Caco-2 (cell line): ENCODE measurements at regions of chr11 and their contacts with region 1.

Region 1: DNA sequence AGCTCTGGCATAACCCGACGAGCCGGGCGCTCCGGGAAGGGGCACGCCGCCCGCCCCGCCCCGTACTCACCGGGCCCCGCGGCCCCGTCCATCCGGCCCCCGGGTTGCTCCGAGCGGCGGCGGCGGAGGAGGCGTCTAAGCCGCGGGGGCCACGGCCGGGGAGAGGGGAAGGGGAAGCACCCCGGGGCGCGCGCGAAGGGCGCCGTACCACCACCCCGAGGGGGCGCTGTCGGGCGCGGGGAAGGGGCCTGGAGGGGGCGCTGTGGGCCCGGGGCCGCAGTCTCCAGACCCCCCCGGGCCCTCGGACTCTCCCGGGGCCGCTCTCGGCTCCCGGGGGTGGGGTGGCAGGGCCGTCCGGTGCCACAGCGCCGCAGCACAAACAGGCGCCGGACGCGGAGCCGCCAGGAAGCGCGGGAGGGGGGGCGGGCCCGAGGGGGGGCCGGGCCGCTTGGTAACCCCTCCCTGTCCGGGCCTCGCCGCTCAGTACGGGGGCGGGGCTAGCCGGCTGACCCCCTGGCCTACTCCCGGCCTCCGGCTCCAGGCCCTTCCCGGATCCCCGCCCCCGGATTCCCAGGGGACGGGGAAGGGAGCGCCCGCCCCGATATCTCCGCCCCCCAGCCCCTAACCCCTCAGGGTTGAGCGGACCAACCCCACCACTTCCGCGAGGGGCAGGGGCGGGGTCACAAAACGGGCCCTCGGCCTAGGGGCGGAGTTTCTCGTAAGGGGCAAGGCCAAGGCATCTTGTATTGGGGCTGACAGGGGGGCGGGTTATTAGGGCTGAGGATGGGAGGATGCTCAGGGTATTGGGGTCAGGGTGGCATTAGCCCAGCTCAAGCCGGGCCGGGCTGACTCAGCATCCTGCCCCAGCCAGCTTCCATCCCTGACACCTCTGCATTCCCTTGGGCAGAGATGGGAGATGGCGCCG is at the starts of genes EML3 and ROM1:
- DNase-seq: peak; percentile 93
- H3K4me3 ChIP-seq: peak within 1 kb of the TSS; percentile 87
- H3K4me3 Mint-ChIP-seq: peak within 1 kb of the TSS; percentile 97
- H3K27ac Mint-ChIP-seq: peak within 1 kb of the TSS; percentile 93
- H3K4me1 ChIP-seq: peaks cover 30% of the 10 kb centered on the region
- H3K4me1 Mint-ChIP-seq: peaks cover 33% of the 10 kb centered on the region
- H3K27me3 ChIP-seq: no peaks in the 10 kb centered on the region
- H3K27me3 Mint-ChIP-seq: no peaks in the 10 kb centered on the region
- CTCF ChIP-seq: peak; percentile 99
- total RNA-seq, gene EML3: 61.2 and 68.7 TPM in 2 replicates
- total RNA-seq, gene ROM1: 1.1 and 1.3 TPM in 2 replicates

Region 2: DNA sequence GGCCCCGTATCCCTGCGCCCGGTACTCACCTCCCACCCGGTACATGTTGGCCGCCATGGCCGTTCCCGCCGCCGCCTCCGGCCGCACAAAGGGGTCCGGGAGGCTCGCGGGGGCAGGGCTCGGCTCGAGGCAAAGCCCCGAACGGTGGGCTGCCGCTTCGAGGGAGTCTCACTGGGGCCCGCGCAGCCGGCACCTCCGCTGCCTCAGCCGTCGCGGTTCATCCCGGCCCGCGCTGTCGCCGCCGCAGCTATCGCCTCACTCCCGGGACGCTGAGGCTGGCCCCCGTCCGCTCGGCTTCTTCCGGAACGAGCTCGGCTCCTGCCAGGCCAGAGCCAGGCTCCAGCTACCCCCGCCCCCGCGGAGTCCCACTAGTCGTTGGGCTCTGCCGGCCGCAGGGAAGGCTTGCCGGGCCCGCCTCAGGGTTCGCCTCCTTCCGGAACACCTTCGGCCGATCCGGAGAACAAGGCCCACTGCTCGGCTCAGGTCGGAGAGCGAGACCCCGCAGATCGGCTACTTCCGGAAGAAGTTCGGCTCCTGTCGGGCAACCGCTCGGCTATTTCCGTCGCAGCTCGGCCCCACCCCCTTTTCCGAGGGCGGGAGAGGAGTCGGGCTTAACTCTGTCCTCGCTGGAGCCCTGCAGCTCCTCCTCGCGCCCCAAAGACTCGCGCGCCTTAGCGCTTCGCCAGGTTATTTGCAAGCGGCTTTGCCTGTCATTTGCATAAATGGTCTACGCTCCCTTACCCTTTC is 11.1 kb before region 1 on chr11 and contains the start of gene MTA2:
- CTCF ChIA-PET with region 1: interaction called, 19 read pairs
- POLR2A ChIA-PET with region 1: interaction called, 6 read pairs
- intact Hi-C with region 1: no loop called
- DNase-seq: peak; percentile 99 to 100
- H3K4me3 ChIP-seq: peak within 1 kb of the TSS; percentile 97
- H3K4me3 Mint-ChIP-seq: peak within 1 kb of the TSS; percentile 88
- H3K27ac Mint-ChIP-seq: peak within 1 kb of the TSS; percentile 89
- H3K4me1 ChIP-seq: peaks cover 35% of the 10 kb centered on the region
- H3K4me1 Mint-ChIP-seq: peaks cover 36% of the 10 kb centered on the region
- H3K27me3 ChIP-seq: no peaks in the 10 kb centered on the region
- H3K27me3 Mint-ChIP-seq: no peaks in the 10 kb centered on the region
- CTCF ChIP-seq: no peak
- total RNA-seq, gene MTA2: 134 and 135 TPM in 2 replicates

Region 3: DNA sequence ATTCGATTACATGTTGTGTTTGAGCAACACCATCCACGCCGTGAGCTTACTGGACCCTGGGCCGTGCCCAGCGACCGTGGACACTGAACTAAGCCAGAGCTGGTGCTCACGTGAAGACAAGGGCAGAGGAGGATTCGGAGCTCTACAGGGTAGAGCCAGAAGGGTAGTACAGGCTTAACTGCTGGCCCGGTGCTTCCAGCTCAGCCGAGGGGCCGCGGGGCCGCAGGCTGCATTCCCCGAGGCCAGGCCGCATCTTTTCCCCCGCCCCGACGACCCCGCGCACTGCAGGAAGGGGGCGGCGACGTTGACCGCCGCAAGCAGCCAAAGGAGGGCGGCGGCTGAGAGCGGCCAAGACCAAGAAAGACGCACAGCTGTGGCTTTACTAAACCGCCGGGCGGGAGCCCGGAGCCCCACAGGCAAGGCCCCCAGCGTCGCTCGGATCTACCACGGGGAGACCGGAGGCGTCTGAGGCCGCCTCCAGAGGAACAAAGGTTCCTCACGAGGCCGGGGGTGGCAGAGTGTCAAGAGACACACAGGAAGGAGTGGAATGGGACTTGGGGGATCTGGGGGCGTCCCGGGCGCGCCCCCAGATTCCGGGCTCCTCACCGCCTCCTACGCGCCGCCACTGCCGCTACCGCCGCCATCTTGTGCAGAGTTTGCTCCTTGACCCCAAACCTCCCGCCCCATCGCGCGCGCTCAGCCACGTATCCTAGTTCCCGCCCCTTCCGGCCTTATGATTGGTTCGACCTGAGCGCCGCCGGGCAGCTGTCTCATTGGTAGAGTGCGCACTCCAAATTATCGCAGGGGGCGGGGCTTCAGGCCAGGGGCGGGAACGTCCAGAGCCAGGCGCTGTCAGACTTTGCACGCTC is 33.6 kb after region 1 on chr11 and contains the start of gene GANAB:
- CTCF ChIA-PET with region 1: interaction called, 6 read pairs
- POLR2A ChIA-PET with region 1: no interaction called
- intact Hi-C with region 1: loop called (anchors 5 kb)
- DNase-seq: peak; percentile 99
- H3K4me3 ChIP-seq: peak within 1 kb of the TSS; percentile 66
- H3K4me3 Mint-ChIP-seq: peak within 1 kb of the TSS; percentile 91
- H3K27ac Mint-ChIP-seq: peak within 1 kb of the TSS; percentile 91
- H3K4me1 ChIP-seq: peaks cover 17% of the 10 kb centered on the region
- H3K4me1 Mint-ChIP-seq: no peaks in the 10 kb centered on the region
- H3K27me3 ChIP-seq: no peaks in the 10 kb centered on the region
- H3K27me3 Mint-ChIP-seq: no peaks in the 10 kb centered on the region
- CTCF ChIP-seq: no peak
- total RNA-seq, gene GANAB: 414 and 442 TPM in 2 replicates